Activated CD4-positive, alpha-beta T cell treated with anti-CD3 and anti-CD28 coated beads, Interleukin-2, amount 10 ng/mL, durations not matched to agents 24 days and 14 days (primary cell): ENCODE measurements at regions of chr12 and their contacts with region 1.

Region 1: DNA sequence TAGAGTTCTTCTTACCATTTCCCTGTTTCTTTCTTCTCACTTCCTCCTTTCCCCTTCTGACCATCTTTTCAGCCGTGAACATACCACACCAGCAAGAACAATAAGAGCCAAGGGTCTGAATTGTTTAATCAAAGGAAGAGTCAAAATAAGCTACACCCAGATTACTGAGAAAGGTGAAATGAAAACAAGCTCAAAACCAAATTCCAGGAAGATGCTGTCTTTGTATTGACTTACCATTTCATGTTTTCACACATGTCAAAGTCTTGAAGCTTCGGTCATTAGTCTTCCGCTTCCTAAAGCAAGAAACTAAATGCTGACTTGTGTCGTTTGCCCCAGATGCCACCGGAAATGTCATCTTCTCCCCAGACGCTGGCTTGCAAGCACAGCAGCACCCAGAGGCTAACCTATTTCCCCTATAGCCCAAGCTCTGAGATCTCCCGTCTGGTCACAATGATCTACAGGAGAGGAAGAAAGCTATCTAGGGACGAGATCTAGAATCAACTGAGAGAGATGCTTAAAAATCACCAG is 136.5 kb upstream of the AMIGO2 start:
- DNase-seq: peak; percentile 93
- H3K4me3 Mint-ChIP-seq: peak overlapping the region; percentile 96
- H3K27ac Mint-ChIP-seq: peak overlapping the region; percentile 98
- H3K4me1 Mint-ChIP-seq: peaks cover 49% of the 10 kb centered on the region
- H3K27me3 Mint-ChIP-seq: no peaks in the 10 kb centered on the region

Region 2: DNA sequence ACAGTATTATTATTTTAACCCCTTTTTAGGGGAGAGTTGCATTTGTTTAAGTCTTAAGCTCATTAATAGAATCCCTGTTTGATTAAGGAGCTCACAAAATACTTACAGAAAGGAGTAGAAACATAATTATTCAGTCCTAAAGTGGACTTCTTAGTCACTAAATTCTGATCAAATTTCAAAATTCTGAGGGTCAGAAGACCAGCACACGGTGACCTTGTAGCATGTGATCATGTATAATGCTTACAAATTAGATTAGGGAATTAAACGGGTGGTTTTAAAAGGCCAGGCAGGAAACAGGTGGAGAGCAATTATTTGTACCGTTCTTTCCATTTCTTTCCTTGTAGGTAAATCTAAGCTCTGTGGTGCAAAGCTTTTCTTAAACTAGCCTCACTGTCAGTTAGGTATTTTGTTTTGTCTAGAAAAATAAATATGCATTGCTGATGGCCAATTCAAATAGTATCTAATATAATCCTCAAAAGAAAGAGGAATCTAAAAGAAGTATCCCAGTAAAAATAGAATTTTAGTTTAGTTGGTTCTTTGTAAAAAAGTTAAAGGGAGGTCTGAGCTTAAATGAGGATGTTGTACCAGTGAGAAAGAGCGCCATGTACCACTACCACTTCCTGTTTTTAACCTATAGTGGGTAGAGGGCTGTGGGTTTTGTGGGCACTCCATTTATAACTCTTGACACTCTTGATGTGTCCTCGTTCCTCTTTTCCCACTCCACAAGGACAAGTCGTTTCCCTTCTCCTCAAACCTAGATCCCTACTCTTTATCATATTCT is 998.5 kb before region 1 on chr12:
- intact Hi-C with region 1: loop called (anchors 2 kb)
- DNase-seq: peak; percentile 92
- H3K4me3 Mint-ChIP-seq: peak overlapping the region; percentile 79
- H3K27ac Mint-ChIP-seq: peak overlapping the region; percentile 98
- H3K4me1 Mint-ChIP-seq: peaks cover 88% of the 10 kb centered on the region
- H3K27me3 Mint-ChIP-seq: no peaks in the 10 kb centered on the region

Region 3: DNA sequence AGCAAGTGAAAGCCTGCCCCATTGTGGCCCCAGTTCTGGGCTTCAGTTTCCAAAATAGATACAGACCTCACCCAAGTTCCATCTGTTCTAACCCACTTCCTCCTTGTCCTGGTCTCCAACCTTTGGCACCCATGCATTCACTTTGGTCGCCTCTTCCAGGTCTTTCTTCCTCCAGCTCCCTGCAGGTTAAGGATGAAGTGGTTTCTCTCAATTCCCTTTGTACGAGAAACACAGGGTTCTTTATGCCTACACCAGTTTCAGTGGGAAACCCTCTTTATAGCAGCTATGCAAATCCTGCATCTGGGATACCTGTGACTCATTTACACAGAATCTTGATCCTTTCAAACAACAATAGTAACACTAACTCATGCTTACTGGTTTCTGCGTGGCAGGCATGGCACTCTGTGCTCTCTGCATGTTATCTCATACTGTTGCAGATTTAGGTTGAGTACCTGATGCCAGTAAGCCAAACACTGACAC is 25.9 kb before region 1 on chr12:
- intact Hi-C with region 1: loop called (anchors 1 kb)
- DNase-seq: no peak
- H3K4me3 Mint-ChIP-seq: peak overlapping the region; percentile 66
- H3K27ac Mint-ChIP-seq: peak overlapping the region; percentile 81
- H3K4me1 Mint-ChIP-seq: peaks cover 63% of the 10 kb centered on the region
- H3K27me3 Mint-ChIP-seq: no peaks in the 10 kb centered on the region

Region 4: DNA sequence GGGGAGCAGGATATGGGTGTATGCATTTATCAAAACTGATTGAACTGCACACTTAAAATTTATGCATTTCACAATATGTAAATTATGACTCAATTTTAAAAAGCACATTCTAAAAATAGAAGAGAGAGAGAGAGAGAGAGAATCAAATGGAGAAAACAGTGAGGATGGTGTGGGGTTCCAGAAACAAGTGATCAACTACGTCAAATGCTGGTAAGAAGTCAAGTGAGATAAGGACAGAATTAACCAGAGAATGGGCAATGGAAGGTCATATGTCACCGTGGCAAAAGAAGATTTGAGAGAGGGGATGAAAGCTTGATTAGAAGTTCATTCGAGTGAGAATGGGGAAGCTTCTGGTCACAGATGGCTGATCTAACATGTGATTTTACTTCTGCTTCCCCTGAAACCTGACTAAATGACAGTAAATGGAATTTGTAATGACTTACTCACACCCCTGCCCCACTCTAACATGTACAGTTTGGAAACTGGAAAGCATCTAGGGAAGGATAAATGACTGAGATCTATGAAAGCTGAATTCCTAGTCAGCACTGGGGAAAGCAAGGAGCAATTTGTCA is 140.0 kb after region 1 on chr12:
- intact Hi-C with region 1: loop called (anchors 1 kb)
- DNase-seq: peak; percentile 71
- H3K4me3 Mint-ChIP-seq: peak overlapping the region; percentile 63
- H3K27ac Mint-ChIP-seq: peak overlapping the region; percentile 98
- H3K4me1 Mint-ChIP-seq: peaks cover 69% of the 10 kb centered on the region
- H3K27me3 Mint-ChIP-seq: no peaks in the 10 kb centered on the region

Region 5: DNA sequence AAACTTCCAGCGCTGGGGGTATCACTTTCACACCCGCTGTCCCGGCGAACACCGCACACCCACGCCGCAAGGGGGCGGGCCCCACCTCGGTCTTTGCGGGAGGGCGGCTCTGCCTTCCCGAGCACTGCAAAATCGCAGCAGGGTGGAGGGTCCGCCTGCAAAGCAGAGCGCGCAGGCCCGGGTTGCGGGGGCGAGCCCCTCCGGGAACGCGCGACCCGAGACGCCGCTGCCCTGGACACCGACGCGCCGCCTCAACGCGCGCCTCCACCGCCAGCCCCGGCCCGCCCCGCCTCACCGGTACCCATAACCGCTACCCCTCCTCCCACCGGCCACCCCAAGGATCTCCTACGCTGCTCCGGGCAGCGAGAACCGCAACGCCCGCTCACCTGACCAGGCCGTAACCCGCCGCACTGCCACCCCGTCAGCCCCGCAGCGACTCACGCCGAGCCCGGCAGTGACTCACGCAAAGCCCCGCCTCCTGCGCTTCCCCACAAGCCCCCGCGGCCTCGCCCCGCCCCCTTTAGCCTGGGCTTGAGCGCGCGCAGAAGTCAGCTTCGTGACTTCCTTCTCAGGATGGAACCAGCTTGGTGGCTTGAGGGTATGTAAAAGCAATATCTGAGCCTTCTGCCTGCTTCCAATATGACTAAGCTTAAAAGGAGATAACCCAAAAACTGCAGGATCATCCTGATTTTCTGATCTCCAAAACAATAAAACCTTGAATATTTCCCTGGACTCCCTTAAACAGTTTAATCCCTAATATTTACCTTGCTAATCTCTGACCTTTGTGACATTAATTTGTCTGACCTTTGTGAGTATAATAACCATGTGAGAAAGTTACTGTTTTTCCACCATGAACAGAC is 489.6 kb after region 1 on chr12 and contains the start of gene RPAP3:
- intact Hi-C with region 1: loop called (anchors 5 kb)
- DNase-seq: peak; percentile 99
- H3K4me3 Mint-ChIP-seq: peak within 1 kb of the TSS; percentile 97
- H3K27ac Mint-ChIP-seq: peak within 1 kb of the TSS; percentile 99
- H3K4me1 Mint-ChIP-seq: peaks cover 53% of the 10 kb centered on the region
- H3K27me3 Mint-ChIP-seq: no peaks in the 10 kb centered on the region
- total RNA-seq, gene RPAP3: 63.4 and 67.3 TPM in 2 replicates